ENCODE measurements at regions of chr1 and their contacts with region 1.

Region 1: DNA sequence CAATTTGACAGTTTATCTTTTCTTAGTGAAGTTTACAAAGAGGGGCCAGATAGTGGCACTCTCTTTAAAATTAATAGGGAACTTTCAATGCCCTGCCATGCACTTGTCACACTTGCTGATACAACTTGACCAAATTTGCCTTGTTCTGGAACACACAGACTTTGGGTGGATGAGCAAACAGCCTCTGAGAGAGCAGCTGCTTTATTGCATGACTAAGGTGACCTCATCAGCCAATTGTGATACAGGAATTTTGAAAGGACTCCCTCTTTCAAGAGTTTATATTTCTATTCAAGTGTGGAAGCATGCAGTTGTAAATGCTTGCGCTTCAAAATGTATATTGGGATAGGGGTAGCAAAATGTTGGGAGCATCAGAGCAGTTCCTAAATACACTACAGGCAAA is 2.1 kb upstream of the RGS1 start:
- DNase-seq: no peak
- H3K4me3 ChIP-seq: no peak overlapping the region
- H3K27ac ChIP-seq: no peak overlapping the region
- H3K4me1 ChIP-seq: no peaks in the 10 kb centered on the region
- H3K27me3 ChIP-seq: no peaks in the 10 kb centered on the region
- CTCF ChIP-seq: no peak
- POLR2A ChIP-seq: no peak

Region 2: DNA sequence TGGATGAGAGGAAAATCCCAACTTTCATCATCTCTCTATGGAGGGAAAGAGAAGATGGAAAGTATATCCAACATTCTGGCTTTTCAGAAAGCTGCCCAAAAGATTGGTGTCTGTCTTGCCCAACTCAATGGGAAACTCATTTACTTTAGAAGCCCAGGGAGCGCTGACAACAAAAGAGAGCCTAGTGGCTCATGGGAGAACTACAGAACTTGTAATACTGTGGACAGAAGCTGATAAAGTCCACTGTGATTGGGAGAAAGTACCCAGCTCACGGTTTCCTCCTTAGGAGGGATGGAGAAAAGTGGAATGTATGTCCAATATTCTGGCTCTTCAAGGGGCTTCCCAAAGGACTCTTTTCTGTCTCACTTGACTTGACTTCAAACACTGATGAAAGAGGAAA is 190.7 kb before region 1 on chr1:
- intact Hi-C with region 1: no loop called
- DNase-seq: no peak
- H3K4me3 ChIP-seq: no peak overlapping the region
- H3K27ac ChIP-seq: no peak overlapping the region
- H3K4me1 ChIP-seq: no peaks in the 10 kb centered on the region
- H3K27me3 ChIP-seq: no peaks in the 10 kb centered on the region
- CTCF ChIP-seq: no peak
- POLR2A ChIP-seq: no peak

Region 3: GRCh38 chr1:192539297-192540092 is 34.0 kb before region 1 on chr1:
- intact Hi-C with region 1: loop called (anchors 5 kb)
- DNase-seq: no peak
- H3K4me3 ChIP-seq: no peak overlapping the region
- H3K27ac ChIP-seq: peak overlapping the region; percentile 54 to 66
- H3K4me1 ChIP-seq: no peaks in the 10 kb centered on the region
- H3K27me3 ChIP-seq: no peaks in the 10 kb centered on the region
- CTCF ChIP-seq: no peak
- POLR2A ChIP-seq: no peak